ENCODE measurements at regions of chr6 and their contacts with region 1.

Region 1: DNA sequence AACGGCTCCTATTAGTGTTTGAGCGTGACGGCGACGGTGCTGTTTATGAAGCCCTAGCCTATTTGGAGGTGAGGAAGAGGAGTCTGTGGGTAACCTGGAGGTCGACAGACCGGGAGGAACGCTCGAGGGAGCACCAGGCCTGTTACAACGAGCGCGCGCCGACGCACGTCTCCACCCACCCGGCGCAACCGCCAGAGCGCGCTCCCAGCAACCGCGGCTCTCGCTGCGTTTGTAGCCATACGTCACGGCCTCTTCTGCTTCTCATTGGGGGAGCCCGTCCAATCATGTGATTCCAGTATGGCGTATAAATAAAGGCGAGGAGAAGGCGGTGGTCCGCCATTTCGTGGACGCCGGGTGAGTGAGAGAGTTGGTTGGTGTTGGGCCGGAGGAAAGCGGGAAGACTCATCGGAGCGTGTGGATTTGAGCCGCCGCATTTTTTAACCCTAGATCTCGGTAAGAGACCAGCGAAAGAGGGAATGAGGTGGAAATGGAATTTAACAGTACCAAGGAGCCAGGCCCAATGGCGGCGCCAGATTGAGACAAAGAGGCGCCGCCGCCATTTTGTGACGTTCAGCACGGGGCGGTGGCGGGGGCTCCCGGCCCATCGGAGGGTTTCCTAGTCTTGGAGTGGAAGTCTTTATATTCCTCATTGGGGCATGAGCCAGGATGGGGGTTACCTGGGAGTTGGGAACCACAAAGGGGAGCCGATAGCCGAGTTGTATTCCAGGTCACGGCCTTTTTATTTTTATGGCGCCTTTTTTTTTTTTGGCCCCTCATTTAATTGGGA is at the start of gene SRSF3:
- DNase-seq: peak; percentile 95
- ATAC-seq: peak; percentile 92
- H3K4me3 Mint-ChIP-seq: peak within 1 kb of the TSS; percentile 97
- H3K27ac Mint-ChIP-seq: peak within 1 kb of the TSS; percentile 99
- H3K4me1 Mint-ChIP-seq: peaks cover 22% of the 10 kb centered on the region
- H3K27me3 Mint-ChIP-seq: no peaks in the 10 kb centered on the region
- total RNA-seq, gene SRSF3: 389 to 396 TPM

Region 2: DNA sequence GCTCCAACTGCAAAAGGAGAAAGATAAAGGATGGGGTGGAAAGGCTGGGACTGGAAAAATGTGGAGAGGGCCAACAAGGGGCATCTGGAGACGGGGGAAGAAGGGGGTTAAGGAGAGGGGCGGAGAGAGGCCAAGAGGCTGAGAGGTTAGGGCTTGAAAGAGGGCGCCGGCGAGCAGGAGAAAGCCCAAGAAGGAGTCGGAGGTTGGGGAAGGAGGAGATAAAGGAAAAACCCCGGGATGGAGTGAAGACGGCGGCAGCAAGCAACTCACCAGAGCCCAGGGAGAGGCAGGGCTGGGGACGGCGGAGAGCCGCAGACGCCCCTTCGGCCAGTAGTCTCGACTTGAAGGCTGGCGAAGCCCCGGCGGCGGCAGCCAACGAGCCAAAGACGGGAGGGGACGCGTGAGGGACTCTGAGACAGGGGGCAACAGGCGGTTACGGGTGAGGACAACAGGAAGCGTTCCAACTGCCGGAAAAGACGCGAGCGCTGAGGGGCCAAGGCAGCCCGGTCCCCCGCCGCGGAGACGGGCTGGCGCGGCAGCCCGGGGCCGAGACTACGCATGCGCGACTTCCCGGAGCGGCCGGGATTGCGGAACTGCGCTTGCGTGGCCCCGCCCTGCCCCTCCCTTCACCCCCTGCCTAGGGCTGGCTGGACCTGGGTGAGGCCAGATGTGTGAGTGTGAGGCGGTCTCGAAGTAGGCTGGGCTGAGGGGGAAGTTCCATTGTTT is 47.1 kb before region 1 on chr6 and contains the start of gene STK38:
- POLR2A ChIA-PET with region 1: interaction called, 65 read pairs
- DNase-seq: peak; percentile 93
- ATAC-seq: peak; percentile 89
- H3K4me3 Mint-ChIP-seq: peak within 1 kb of the TSS; percentile 93
- H3K27ac Mint-ChIP-seq: peak within 1 kb of the TSS; percentile 92
- H3K4me1 Mint-ChIP-seq: peaks cover 33% of the 10 kb centered on the region
- H3K27me3 Mint-ChIP-seq: no peaks in the 10 kb centered on the region
- total RNA-seq, gene STK38: 86.5 to 95.3 TPM

Region 3: GRCh38 chr6:36605560-36606391 is 11.6 kb after region 1 on chr6:
- POLR2A ChIA-PET with region 1: interaction called, 50 read pairs
- DNase-seq: peak; percentile 11
- ATAC-seq: no peak
- H3K4me3 Mint-ChIP-seq: no peak overlapping the region
- H3K27ac Mint-ChIP-seq: peak overlapping the region; percentile 14
- H3K4me1 Mint-ChIP-seq: peaks cover 49% of the 10 kb centered on the region
- H3K27me3 Mint-ChIP-seq: no peaks in the 10 kb centered on the region